ENCODE measurements at regions of chr6 and their contacts with region 1.

Region 1: DNA sequence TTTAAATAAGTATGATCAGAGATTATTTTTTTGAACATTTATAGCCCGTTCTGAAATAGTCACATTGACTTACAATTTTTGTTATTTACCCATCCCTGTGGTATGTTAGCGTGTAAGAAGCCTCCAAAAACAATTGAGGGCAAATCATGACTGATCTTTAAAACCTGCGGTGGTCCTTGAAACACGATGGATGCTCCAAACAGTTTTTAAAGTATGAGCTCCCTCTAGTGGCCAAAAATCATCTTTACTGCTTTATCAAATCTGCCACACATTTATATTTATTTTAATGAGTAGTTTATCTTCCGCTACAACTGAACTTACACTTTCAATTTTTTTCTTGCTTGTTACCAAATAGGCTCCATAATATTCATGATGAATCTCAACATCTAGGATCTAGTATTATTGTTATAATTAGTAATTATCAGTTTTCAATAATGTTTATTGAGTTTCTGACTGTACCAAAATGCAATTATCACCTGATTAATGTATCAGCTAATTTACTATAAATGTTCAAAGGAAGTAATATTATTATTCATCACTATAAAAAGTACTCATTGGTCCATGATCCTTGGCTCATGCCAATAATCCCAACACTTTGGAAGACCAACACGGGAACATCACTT is 52.2 kb downstream of the MARCKS start:
- DNase-seq: peak in 4 of 5 donors; percentile 23 to 38 (median 31)
- H3K4me3 ChIP-seq: no peak overlapping the region
- H3K4me3 Mint-ChIP-seq: peak overlapping the region in 1 of 8 donors; percentile 45
- H3K27ac ChIP-seq: no peak overlapping the region
- H3K27ac Mint-ChIP-seq: no peak overlapping the region
- H3K4me1 ChIP-seq: no peaks in the 10 kb centered on the region
- H3K4me1 Mint-ChIP-seq: peaks cover 0 to 4% (median 3%) of the 10 kb centered on the region in 4 donors
- H3K27me3 ChIP-seq: no peaks in the 10 kb centered on the region
- H3K27me3 Mint-ChIP-seq: peaks cover 5 to 6% of the 10 kb centered on the region in 2 donors

Region 2: DNA sequence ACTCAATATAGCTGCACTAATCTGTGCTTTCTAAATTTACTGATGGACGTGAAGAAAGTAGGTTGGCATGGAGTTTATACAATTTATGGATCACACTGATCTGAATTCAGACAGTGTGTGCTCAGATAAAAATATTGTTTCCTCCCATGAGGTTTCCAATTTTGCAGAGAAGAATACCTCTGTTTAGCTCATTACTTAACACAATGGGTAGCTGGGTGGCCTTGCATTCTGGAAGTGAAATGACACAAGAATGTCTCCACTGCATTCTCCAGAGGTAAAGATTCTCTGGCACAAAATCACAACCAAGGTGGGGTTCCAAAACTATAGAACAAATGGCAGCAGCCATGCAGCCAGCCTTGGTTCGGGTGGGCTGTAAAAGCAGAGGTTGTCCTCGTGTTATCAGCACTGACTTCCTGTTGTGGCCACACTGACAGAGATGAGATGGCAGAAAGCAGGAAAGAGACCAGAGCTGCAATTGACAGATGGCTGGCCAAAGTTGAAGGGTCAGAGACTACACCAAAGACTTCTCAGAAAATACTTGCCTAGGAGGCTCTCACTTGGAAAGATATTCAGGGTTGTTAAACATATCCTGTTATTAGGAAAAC is 11.4 kb after region 1 on chr6:
- CTCF ChIA-PET with region 1: interaction called, 71 read pairs
- POLR2A ChIA-PET with region 1: no interaction called
- intact Hi-C with region 1: no loop called
- DNase-seq: no peak
- H3K4me3 ChIP-seq: no peak overlapping the region
- H3K4me3 Mint-ChIP-seq: peak overlapping the region in 1 of 8 donors; percentile 41
- H3K27ac ChIP-seq: no peak overlapping the region
- H3K27ac Mint-ChIP-seq: peak overlapping the region in 1 of 7 donors; percentile 4
- H3K4me1 ChIP-seq: peaks cover 7% of the 10 kb centered on the region
- H3K4me1 Mint-ChIP-seq: peaks cover 7 to 12% (median 8%) of the 10 kb centered on the region in 4 donors
- H3K27me3 ChIP-seq: no peaks in the 10 kb centered on the region
- H3K27me3 Mint-ChIP-seq: peaks cover 0 to 1% of the 10 kb centered on the region in 2 donors

Region 3: DNA sequence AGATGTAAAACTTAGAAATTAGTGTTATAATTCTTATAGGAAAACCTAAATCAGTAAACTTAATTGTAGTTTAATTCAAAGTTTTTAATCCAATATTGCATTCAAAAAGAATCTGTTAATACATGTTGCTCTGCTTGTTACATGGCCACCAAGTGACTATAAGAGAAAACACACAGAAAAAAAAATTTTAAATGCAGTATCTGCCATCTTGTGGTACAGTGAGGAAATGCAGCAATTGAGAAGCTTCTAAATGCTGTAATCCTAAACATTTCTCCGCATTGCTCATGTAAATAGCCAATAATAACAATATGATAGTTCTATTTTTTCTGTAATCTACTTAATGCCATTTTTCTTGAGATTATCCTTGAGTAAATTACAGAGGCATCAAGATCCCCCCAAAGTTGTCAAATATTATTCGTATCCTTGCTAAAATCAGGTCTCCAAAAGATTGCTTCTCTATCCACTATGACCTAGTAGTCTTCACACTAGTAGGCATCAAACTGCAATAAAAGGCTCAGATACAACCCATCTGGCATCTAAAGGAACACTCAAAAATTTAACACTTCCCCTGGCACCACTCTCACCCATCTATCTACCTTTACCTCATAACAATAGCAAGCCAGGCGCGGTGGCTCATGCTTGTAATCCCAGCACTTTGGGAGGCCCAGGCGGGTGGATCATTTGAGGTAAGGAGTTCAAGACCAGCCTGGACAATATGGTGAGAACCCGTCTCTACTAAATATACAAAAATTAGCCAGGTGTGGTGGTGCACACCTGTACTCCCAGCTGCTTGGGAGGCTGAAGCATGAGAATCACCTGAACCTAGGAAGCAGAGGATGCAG is 27.0 kb after region 1 on chr6:
- CTCF ChIA-PET with region 1: interaction called, 11 read pairs
- POLR2A ChIA-PET with region 1: no interaction called
- intact Hi-C with region 1: no loop called
- DNase-seq: peak in 4 of 5 donors; percentile 21 to 34 (median 29)
- H3K4me3 ChIP-seq: no peak overlapping the region
- H3K4me3 Mint-ChIP-seq: no peak overlapping the region
- H3K27ac ChIP-seq: no peak overlapping the region
- H3K27ac Mint-ChIP-seq: peak overlapping the region in 1 of 7 donors; percentile 43
- H3K4me1 ChIP-seq: no peaks in the 10 kb centered on the region
- H3K4me1 Mint-ChIP-seq: no peaks in the 10 kb centered on the region
- H3K27me3 ChIP-seq: no peaks in the 10 kb centered on the region
- H3K27me3 Mint-ChIP-seq: no peaks in the 10 kb centered on the region